ENCODE measurements at regions of chr13 and their contacts with region 1.

Region 1: DNA sequence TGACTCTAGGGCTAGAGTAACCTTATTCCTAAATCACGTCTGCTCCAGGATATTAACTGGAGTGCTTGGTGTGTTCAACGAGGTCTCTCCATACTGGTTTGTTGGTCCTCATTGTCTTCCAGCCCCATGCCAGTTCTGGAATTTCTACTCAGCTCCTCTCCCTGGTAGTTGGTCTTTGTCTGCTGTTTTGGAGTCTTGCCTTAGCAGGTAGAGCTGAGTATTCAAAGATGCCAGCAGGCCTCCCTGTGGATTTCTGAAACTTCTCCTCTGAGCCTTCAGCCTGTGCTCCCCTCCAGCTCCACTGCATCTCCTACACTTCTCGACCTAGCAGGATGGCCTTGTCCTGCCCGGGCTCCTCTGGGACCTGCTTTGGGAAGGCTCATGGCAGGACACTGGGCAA is 25.5 kb downstream of the SOX1 start:
- DNase-seq: no peak
- H3K4me3 ChIP-seq: no peak overlapping the region
- H3K27ac ChIP-seq: peak overlapping the region; percentile 66
- H3K4me1 ChIP-seq: peaks cover 47% of the 10 kb centered on the region
- H3K27me3 ChIP-seq: no peaks in the 10 kb centered on the region
- CTCF ChIP-seq: no peak

Region 2: DNA sequence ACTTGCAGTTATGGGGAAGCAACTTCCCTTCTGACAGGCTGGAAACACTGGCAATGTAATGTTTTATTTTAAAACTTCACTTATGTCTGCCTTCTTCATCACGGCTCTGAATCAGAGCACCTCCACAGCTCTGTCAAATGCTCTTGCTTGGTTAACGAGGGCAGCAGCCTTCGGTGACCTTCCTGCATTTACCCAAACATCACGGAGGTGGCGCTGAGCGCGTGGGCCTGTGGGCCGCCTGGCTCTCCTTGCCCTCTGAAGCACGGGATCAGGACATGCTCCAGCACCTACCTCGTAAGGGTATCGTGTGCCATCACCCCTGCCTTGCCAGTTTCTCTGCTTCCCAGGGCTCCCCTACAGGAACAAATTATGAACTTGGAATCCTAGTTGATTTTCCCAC is 462.0 kb before region 1 on chr13:
- CTCF ChIA-PET with region 1: no interaction called
- POLR2A ChIA-PET with region 1: no interaction called
- intact Hi-C with region 1: no loop called
- DNase-seq: no peak
- H3K4me3 ChIP-seq: no peak overlapping the region
- H3K27ac ChIP-seq: no peak overlapping the region
- H3K4me1 ChIP-seq: no peaks in the 10 kb centered on the region
- H3K27me3 ChIP-seq: peaks cover 70% of the 10 kb centered on the region
- CTCF ChIP-seq: no peak

Region 3: GRCh38 chr13:112072531-112073244 is 19.8 kb before region 1 on chr13:
- CTCF ChIA-PET with region 1: no interaction called
- POLR2A ChIA-PET with region 1: interaction called, 14 read pairs
- intact Hi-C with region 1: loop called (anchors 2 kb)
- DNase-seq: peak; percentile 86
- H3K4me3 ChIP-seq: peak overlapping the region; percentile 63
- H3K27ac ChIP-seq: peak overlapping the region; percentile 93
- H3K4me1 ChIP-seq: peaks cover 4% of the 10 kb centered on the region
- H3K27me3 ChIP-seq: peaks cover 65% of the 10 kb centered on the region
- CTCF ChIP-seq: no peak